ENCODE measurements at regions of chr22 and their contacts with region 1.

Region 1: DNA sequence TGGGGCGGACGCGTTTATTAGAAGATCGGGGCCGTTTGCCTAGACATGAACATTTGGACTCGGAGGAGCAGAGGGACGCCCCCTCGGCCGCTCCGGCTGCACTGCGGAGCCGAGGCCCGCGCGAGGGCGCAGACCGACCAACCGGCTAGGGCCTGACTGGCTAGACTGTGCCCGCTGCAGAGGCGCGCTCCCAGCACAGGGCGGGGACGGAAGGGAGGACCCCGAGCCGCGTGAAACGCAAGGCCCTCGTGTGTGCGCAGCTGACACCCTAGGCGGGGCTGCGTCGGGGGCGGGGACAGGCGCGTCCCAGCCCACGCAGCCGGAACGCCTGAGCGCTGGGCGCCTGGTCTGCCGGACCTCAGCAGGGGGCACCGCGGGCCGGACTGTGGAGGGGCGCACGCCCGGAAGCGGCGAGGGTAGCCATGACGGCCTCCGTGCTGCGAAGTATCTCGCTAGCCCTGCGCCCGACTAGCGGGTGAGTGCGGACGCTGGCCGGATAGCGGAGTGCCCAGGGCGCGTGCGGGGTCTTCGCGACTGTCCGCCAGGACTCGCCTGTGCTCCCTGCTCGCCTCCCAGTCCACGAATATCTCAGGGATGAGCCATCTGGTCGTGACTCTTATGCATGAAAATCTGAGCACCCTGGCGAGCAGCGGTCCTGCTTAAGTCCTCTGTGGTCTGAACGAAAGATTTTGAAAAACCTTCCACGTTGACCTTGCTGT is at the start of gene MRPL40:
- DNase-seq: peak; percentile 61 to 93 (median 88)
- ATAC-seq: peak; percentile 82
- H3K4me3 ChIP-seq: peak within 1 kb of the TSS; percentile 73 to 88
- H3K4me3 Mint-ChIP-seq: peak within 1 kb of the TSS; percentile 91
- H3K27ac ChIP-seq: peak within 1 kb of the TSS; percentile 90 to 96
- H3K27ac Mint-ChIP-seq: peak within 1 kb of the TSS; percentile 93
- H3K4me1 ChIP-seq: peaks cover 25% of the 10 kb centered on the region
- H3K4me1 Mint-ChIP-seq: peaks cover 42% of the 10 kb centered on the region
- H3K27me3 ChIP-seq: no peaks in the 10 kb centered on the region
- H3K27me3 Mint-ChIP-seq: no peaks in the 10 kb centered on the region
- CTCF ChIP-seq: no peak
- total RNA-seq, gene MRPL40: 9.9 to 10.5 TPM

Region 2: DNA sequence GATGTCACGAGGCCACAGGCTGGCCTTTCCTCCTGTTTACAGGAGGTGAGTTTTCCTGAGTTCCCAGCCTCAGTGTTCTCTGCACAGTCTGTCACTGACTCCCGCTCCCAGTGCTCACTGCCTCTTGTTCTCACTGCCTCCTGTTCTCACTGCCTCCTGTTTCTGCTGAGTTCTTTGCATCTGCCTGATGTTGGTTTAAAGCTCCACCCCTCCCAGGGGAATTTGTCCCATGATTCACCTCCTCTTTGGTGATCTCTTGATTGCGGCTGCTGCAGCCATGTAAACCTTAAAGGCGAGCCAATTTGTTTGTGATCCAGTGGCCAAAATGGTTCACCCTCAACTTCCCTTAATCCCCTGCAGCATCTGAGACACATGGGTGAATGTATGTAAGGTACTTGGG is 1327.7 kb before region 1 on chr22:
- CTCF ChIA-PET with region 1: no interaction called
- POLR2A ChIA-PET with region 1: no interaction called
- intact Hi-C with region 1: no loop called
- DNase-seq: no peak
- ATAC-seq: no peak
- H3K4me3 ChIP-seq: no peak overlapping the region
- H3K4me3 Mint-ChIP-seq: no peak overlapping the region
- H3K27ac ChIP-seq: no peak overlapping the region
- H3K27ac Mint-ChIP-seq: no peak overlapping the region
- H3K4me1 ChIP-seq: no peaks in the 10 kb centered on the region
- H3K4me1 Mint-ChIP-seq: peaks cover 3% of the 10 kb centered on the region
- H3K27me3 ChIP-seq: peaks cover 0 to 7% of the 10 kb centered on the region in 2 experiments
- H3K27me3 Mint-ChIP-seq: peaks cover 17% of the 10 kb centered on the region
- CTCF ChIP-seq: no peak

Region 3: DNA sequence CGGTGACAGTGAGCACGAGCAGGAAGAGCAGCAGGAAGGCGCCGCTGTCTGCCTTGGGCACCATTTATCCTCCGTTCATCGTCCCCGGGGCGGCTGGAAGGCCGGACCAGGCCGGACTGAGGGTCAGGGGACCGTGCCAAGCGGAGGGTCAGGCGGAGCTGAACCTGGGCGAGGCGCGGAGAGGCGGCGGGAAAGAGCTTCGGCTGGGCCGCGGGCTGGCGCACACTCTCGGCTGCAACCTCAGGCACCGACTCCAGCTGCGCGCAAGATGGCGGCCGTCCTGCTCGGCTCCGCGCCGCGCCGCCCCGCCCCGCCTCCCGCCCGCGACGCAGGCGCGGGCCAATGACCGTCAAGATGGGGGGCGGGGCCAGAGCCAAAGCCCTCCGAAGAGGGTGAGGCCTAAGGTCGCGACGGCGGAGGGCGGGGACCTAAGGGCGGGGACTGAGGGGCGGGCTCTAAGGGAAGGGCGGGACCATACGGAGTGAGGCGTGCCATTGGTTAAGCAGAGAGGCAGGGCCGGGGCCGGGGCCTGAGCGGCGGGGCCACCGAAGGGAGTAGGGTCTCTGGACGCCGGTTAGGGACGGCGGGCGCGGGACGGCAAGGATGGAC is 310.0 kb before region 1 on chr22 and contains the start of gene DGCR2:
- CTCF ChIA-PET with region 1: no interaction called
- POLR2A ChIA-PET with region 1: interaction called, 3 read pairs
- intact Hi-C with region 1: loop called (anchors 1 to 2 kb)
- DNase-seq: peak; percentile 93 to 98 (median 97)
- ATAC-seq: peak; percentile 98
- H3K4me3 ChIP-seq: peak within 1 kb of the TSS; percentile 73 to 78
- H3K4me3 Mint-ChIP-seq: peak within 1 kb of the TSS; percentile 89
- H3K27ac ChIP-seq: peak within 1 kb of the TSS; percentile 75 to 88
- H3K27ac Mint-ChIP-seq: peak within 1 kb of the TSS; percentile 90
- H3K4me1 ChIP-seq: peaks cover 49% of the 10 kb centered on the region
- H3K4me1 Mint-ChIP-seq: peaks cover 47% of the 10 kb centered on the region
- H3K27me3 ChIP-seq: no peaks in the 10 kb centered on the region
- H3K27me3 Mint-ChIP-seq: no peaks in the 10 kb centered on the region
- CTCF ChIP-seq: no peak
- total RNA-seq, gene DGCR2: 29.6 to 32.4 TPM

Region 4: DNA sequence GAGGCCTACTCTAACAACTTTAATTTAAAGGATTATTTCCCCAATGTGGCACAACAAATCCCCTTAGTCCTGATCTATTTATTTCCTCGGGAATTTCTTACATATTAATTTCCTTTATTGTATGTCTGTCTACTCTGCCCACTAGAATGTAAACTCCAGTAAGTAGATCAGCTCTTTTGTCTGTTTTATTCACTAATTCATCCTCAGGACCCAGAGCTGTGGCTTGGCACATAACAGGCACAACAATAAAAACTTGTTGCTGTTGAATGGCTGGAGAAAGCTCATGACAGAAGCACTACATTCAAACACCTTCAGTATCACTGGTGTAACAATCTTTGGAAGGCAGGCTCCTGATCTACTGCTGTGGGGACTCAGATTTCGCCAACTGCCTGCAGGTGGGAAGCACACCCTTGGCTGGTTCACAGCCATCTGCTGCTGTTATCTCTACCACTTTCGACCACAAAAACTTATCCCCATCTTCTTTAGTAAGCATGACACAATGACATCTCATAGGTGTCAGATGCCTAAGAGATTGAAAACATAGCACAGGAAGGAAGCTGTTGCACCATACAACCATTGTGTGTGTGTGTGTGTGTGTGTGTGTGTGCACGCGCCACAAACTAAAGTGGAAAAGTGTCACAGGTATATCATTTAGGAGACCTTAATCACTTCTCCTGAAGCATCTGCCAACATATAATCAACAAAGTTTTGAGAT is 12.7 kb before region 1 on chr22:
- CTCF ChIA-PET with region 1: no interaction called
- POLR2A ChIA-PET with region 1: interaction called, 19 read pairs
- intact Hi-C with region 1: no loop called
- DNase-seq: peak in 7 of 9 experiments; percentile 7 to 91 (median 46)
- ATAC-seq: peak; percentile 91
- H3K4me3 ChIP-seq: no peak overlapping the region
- H3K4me3 Mint-ChIP-seq: peak overlapping the region; percentile 16
- H3K27ac ChIP-seq: peak overlapping the region; percentile 54 to 91
- H3K27ac Mint-ChIP-seq: peak overlapping the region; percentile 92
- H3K4me1 ChIP-seq: peaks cover 44% of the 10 kb centered on the region
- H3K4me1 Mint-ChIP-seq: peaks cover 70% of the 10 kb centered on the region
- H3K27me3 ChIP-seq: no peaks in the 10 kb centered on the region
- H3K27me3 Mint-ChIP-seq: no peaks in the 10 kb centered on the region
- CTCF ChIP-seq: no peak

Region 5: DNA sequence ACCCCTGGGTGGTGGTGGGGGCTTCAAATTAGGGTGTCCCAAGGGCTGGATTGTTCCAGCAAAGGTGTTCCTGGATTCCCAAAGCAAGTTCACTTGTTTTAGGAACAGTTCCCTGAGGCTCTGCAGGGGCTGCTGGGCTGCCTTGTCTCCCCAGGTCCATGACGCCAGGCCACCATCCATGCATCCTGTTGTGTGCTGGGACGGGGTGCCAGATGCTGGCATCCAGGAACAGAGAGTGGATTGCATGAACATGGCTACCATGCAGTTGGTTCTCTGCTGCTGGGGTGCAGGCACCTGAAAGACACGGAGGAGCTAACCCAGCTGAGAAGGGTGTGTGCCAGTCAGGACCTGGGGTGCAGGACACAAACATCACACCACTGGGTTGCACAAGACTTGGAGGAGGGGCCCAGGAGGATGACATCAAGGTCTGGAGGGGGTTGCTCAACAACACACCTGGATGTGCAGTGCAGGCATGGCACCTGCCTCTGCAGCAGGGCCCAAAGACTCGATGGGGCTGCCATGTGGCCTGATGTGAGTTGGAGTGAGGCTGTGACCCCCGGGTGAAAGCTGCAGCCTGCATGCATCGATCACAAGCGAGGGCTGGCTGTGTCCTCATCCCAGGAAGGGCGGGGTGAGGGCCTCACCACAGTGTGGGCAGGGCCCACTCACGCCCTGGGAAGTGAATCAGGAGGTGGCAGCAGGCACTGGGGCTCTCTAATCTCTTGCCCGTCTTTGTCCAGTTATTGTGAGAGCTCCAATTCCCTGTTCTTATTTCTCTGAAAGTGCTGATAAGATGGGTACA is 166.0 kb after region 1 on chr22:
- CTCF ChIA-PET with region 1: no interaction called
- POLR2A ChIA-PET with region 1: interaction called, 10 read pairs
- intact Hi-C with region 1: loop called in 1 of 2 experiments (anchors 2 kb)
- DNase-seq: peak in 4 of 9 experiments; percentile 20 to 62 (median 42)
- ATAC-seq: peak; percentile 18
- H3K4me3 ChIP-seq: peak overlapping the region in 1 of 2 experiments; percentile 17
- H3K4me3 Mint-ChIP-seq: peak overlapping the region; percentile 15
- H3K27ac ChIP-seq: peak overlapping the region; percentile 39 to 66
- H3K27ac Mint-ChIP-seq: peak overlapping the region; percentile 92
- H3K4me1 ChIP-seq: peaks cover 46% of the 10 kb centered on the region
- H3K4me1 Mint-ChIP-seq: peaks cover 55% of the 10 kb centered on the region
- H3K27me3 ChIP-seq: no peaks in the 10 kb centered on the region
- H3K27me3 Mint-ChIP-seq: no peaks in the 10 kb centered on the region
- CTCF ChIP-seq: no peak

Region 6: DNA sequence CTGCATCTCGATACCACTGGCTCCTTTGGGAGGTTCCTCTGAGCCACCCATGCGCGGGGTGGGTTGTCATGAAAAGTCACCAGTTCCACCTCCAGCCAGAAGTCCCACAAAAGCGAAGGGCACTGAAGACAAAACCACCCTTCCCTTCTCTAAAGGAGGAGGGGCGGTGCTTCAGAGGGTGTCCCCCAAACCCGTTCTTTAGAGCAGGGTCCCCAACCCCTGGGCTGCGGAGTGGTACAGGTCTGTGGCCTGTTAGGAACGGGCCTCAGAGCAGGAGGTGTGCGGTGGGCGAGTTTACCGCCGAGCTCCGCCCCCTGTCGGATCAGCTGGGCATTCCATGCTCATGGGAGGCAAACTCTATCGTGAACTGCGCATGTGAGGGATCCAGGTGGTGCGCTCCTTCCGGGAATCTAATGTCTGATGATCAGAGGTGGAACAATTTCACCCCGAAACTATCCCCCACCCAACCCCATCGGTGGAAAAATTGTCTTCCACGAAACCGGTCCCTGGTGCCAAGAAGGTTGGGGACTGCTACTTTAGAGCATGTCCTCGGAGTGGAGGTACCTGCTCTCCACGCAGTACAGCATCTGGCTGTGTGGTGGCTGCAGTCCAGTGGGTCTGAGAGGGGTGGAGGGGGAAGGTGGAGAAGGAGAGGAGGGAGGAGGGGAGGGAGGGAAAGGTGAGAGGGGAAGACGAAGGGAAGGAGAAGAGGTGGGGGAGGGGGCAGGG is 209.1 kb after region 1 on chr22:
- CTCF ChIA-PET with region 1: no interaction called
- POLR2A ChIA-PET with region 1: no interaction called
- intact Hi-C with region 1: no loop called
- DNase-seq: no peak
- ATAC-seq: no peak
- H3K4me3 ChIP-seq: no peak overlapping the region
- H3K4me3 Mint-ChIP-seq: no peak overlapping the region
- H3K27ac ChIP-seq: no peak overlapping the region
- H3K27ac Mint-ChIP-seq: no peak overlapping the region
- H3K4me1 ChIP-seq: no peaks in the 10 kb centered on the region
- H3K4me1 Mint-ChIP-seq: no peaks in the 10 kb centered on the region
- H3K27me3 ChIP-seq: no peaks in the 10 kb centered on the region
- H3K27me3 Mint-ChIP-seq: peaks cover 17% of the 10 kb centered on the region
- CTCF ChIP-seq: no peak

Region 7: DNA sequence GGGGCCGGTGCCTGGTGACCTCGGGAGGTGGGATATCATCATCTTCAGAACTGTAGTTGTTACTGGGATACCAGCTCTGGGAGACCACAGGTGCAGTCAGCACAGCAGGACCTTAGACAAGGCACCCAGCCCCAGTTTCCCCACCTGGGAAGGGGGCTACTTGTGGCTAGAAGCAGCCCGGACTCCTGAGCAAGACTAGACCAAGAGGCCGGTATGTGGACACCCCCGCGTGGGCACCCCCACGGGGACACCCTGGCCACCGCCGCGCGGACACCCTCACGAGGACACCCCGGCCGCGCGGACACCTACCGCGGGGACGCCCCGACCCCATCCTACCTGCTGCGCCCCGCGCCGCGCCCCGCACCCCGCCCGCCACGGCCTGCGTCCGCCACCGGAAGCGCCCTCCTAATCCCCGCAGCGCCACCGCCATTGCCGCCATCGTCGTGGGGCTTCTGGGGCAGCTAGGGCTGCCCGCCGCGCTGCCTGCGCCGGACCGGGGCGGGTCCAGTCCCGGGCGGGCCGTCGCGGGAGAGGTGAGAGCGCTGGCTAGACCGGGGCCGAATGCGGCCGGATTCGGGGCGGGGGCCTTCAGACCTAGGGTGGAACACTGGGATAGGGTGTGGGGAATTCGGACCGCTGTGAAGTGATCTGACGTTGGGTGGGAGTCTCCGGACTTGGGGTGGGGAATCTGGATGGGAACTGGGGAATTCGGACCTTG is 509.2 kb after region 1 on chr22 and contains the starts of genes COMT and TXNRD2:
- CTCF ChIA-PET with region 1: no interaction called
- POLR2A ChIA-PET with region 1: no interaction called
- intact Hi-C with region 1: loop called in 1 of 2 experiments (anchors 5 kb)
- DNase-seq: peak; percentile 38 to 85 (median 73)
- ATAC-seq: peak; percentile 87
- H3K4me3 ChIP-seq: peak within 1 kb of the TSS; percentile 88 to 99
- H3K4me3 Mint-ChIP-seq: peak within 1 kb of the TSS; percentile 91
- H3K27ac ChIP-seq: peak within 1 kb of the TSS; percentile 66 to 71
- H3K27ac Mint-ChIP-seq: peak within 1 kb of the TSS; percentile 96
- H3K4me1 ChIP-seq: peaks cover 29% of the 10 kb centered on the region
- H3K4me1 Mint-ChIP-seq: peaks cover 36% of the 10 kb centered on the region
- H3K27me3 ChIP-seq: no peaks in the 10 kb centered on the region
- H3K27me3 Mint-ChIP-seq: no peaks in the 10 kb centered on the region
- CTCF ChIP-seq: no peak
- total RNA-seq, gene COMT: 10.5 to 11.0 TPM
- total RNA-seq, gene TXNRD2: 11.0 to 14.1 TPM